ENCODE measurements at regions of chr16 and their contacts with region 1.

Region 1: DNA sequence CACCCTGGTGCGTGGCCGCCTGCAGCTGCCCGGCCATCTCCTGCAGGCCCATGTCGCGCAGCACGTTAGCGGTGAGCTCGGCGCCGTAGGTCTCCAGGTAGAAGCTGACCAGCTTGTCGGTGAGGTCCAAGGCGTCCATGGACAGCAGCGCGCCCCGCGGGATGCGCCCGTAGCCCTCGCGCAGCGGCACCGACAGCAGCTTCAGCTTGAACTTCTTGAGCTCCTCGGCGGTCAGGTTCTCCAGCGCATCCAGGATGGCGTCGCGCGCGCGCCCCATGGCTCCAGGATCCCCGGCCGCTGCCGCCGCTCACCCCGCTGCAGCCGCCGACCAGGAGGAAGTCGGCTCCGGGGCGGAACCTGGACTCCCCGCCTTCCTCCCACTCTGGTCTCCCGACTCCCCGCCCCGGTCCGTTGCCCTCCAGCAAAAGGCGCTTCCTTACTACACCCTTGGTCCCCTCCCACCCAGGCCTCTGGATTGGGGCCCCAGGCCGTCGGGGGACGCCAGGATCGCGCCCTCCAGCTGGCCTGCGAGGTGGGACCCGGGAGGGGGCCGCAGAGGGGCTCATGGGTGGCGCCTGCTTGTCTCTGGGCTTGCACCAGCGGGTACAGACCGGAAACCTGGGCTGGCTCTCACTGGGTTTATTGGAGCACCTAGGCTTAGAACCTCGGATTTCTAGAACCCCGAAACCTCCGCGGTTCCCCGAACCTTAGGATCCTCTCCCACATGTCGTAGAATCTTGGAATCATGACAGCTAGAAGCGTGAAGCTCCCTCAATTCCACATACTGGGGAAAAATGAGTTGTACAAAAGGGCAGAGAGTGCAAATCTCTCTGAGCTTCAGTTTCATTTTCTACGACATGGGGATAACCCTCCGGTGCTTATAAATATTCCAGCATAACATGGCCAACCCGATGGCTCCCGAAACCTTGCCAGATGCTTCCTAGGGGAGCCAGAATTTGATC is at the start of gene PYCARD:
- DNase-seq: peak; percentile 46 to 65 (median 57)
- H3K4me3 ChIP-seq: peak within 1 kb of the TSS; percentile 63 to 94 (median 92)
- H3K4me3 Mint-ChIP-seq: peak within 1 kb of the TSS; percentile 97 to 99
- H3K27ac ChIP-seq: peak within 1 kb of the TSS; percentile 61 to 85
- H3K27ac Mint-ChIP-seq: peak within 1 kb of the TSS; percentile 85 to 97 (median 92)
- H3K4me1 ChIP-seq: peaks cover 52 to 69% of the 10 kb centered on the region in 2 donors
- H3K4me1 Mint-ChIP-seq: peaks cover 72% of the 10 kb centered on the region
- H3K27me3 ChIP-seq: no peaks in the 10 kb centered on the region
- H3K27me3 Mint-ChIP-seq: peaks cover 5 to 9% (median 6%) of the 10 kb centered on the region in 3 donors
- CTCF ChIP-seq: no peak
- polyA plus RNA-seq, gene PYCARD: 214 to 400 (median 374) TPM

Region 2: GRCh38 chr16:31215287-31216162 is 12.8 kb after region 1 on chr16:
- intact Hi-C with region 1: loop called in 1 of 2 experiments (anchors 2 kb)
- DNase-seq: peak; percentile 30 to 40 (median 36)
- H3K4me3 ChIP-seq: peak overlapping the region; percentile 36 to 79 (median 52)
- H3K4me3 Mint-ChIP-seq: peak overlapping the region; percentile 81 to 97
- H3K27ac ChIP-seq: no peak overlapping the region
- H3K27ac Mint-ChIP-seq: peak overlapping the region in 5 of 7 donors; percentile 11 to 49 (median 27)
- H3K4me1 ChIP-seq: peaks cover 34 to 40% of the 10 kb centered on the region in 2 donors
- H3K4me1 Mint-ChIP-seq: peaks cover 41% of the 10 kb centered on the region
- H3K27me3 ChIP-seq: peaks cover 9 to 48% of the 10 kb centered on the region in 2 donors
- H3K27me3 Mint-ChIP-seq: peaks cover 55 to 67% (median 56%) of the 10 kb centered on the region in 3 donors
- CTCF ChIP-seq: no peak

Region 3: GRCh38 chr16:31260136-31260918 is 57.6 kb after region 1 on chr16:
- intact Hi-C with region 1: loop called in 1 of 2 experiments (anchors 5 kb)
- DNase-seq: peak in 2 of 3 donors; percentile 37 to 44
- H3K4me3 ChIP-seq: peak overlapping the region; percentile 55 to 98 (median 97)
- H3K4me3 Mint-ChIP-seq: peak overlapping the region; percentile 93 to 98
- H3K27ac ChIP-seq: peak overlapping the region; percentile 54 to 81
- H3K27ac Mint-ChIP-seq: peak overlapping the region; percentile 90 to 98 (median 96)
- H3K4me1 ChIP-seq: peaks cover 73 to 82% of the 10 kb centered on the region in 2 donors
- H3K4me1 Mint-ChIP-seq: peaks cover 70% of the 10 kb centered on the region
- H3K27me3 ChIP-seq: no peaks in the 10 kb centered on the region
- H3K27me3 Mint-ChIP-seq: peaks cover 0 to 6% (median 2%) of the 10 kb centered on the region in 3 donors
- CTCF ChIP-seq: no peak

Region 4: DNA sequence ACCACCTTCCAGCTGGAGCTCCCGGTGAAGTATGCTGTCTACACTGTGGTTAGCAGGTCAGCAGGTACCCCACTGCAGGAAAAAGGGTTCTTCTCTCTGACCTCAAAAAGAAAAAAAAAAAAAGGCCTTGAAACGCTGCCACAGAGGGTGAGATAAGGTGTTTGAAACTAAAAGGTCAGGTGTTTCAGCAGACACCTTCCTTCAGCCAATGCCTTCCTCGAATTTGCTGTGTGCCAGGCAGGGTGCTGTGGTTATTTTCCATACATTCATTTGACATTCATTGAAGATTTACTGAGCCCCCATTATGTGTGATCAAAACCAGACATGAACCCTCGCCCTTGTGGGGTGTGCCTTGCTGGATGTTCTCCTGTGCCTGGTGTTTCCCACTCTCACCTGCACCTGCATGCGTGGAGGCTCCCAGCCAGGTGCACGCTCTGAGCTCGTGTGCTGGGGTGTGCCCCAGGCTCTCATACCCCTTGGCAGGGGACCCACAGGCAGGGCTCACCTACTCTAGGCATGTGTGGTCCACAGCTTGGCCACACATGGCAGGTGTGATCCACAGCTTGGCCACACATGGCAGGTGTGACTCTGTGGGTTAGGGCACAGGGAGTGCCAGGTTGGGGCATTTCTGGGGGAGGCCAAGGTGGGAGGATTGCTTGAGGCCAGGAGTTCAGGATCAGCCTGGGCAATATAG is 174.7 kb after region 1 on chr16:
- intact Hi-C with region 1: loop called in 1 of 2 experiments (anchors 5 kb)
- DNase-seq: no peak
- H3K4me3 ChIP-seq: no peak overlapping the region
- H3K4me3 Mint-ChIP-seq: no peak overlapping the region
- H3K27ac ChIP-seq: no peak overlapping the region
- H3K27ac Mint-ChIP-seq: peak overlapping the region in 1 of 7 donors; percentile 54
- H3K4me1 ChIP-seq: peaks cover 0 to 2% of the 10 kb centered on the region in 2 donors
- H3K4me1 Mint-ChIP-seq: peaks cover 2% of the 10 kb centered on the region
- H3K27me3 ChIP-seq: no peaks in the 10 kb centered on the region
- H3K27me3 Mint-ChIP-seq: peaks cover 0 to 2% (median 0%) of the 10 kb centered on the region in 3 donors
- CTCF ChIP-seq: no peak

Region 5: DNA sequence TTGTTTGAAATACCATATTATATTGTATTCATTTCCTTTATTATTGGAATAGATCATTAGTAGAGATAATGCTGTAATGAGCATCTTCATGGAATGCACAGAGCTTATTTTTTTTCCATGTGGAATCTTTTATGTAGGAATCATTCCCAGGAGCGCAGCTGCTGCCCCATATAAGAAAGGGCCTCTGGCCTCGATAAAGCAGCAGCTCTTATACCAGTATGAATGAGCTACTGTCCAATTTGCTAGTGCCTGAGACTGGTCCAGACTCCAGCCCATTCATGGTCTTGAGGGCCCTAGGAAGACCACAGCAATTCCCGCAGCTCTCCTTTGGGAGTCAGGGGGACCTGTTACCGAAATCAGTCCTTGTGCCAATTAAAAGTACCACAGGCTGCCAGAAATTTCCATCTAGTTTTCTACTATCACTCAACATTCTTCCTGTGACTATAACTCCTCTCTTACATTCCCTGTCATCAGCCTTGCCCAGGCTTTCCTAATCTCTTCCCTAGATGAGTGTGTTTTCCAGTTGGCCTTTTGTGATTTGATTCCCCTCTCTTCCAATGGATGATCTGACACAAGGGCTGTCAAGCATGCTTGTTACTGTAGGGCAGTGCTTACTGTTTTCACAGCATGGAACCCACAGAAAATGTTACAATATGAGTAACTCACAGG is 238.0 kb after region 1 on chr16:
- intact Hi-C with region 1: loop called in 1 of 2 experiments (anchors 5 kb)
- DNase-seq: no peak
- H3K4me3 ChIP-seq: no peak overlapping the region
- H3K4me3 Mint-ChIP-seq: no peak overlapping the region
- H3K27ac ChIP-seq: no peak overlapping the region
- H3K27ac Mint-ChIP-seq: no peak overlapping the region
- H3K4me1 ChIP-seq: peaks cover 0 to 4% of the 10 kb centered on the region in 2 donors
- H3K4me1 Mint-ChIP-seq: peaks cover 6% of the 10 kb centered on the region
- H3K27me3 ChIP-seq: no peaks in the 10 kb centered on the region
- H3K27me3 Mint-ChIP-seq: peaks cover 2 to 10% (median 4%) of the 10 kb centered on the region in 3 donors
- CTCF ChIP-seq: no peak

Measured in CD14-positive monocyte (primary cell).